HepG2 (cell line): ENCODE measurements at regions of chr14 and their contacts with region 1.

Region 1: DNA sequence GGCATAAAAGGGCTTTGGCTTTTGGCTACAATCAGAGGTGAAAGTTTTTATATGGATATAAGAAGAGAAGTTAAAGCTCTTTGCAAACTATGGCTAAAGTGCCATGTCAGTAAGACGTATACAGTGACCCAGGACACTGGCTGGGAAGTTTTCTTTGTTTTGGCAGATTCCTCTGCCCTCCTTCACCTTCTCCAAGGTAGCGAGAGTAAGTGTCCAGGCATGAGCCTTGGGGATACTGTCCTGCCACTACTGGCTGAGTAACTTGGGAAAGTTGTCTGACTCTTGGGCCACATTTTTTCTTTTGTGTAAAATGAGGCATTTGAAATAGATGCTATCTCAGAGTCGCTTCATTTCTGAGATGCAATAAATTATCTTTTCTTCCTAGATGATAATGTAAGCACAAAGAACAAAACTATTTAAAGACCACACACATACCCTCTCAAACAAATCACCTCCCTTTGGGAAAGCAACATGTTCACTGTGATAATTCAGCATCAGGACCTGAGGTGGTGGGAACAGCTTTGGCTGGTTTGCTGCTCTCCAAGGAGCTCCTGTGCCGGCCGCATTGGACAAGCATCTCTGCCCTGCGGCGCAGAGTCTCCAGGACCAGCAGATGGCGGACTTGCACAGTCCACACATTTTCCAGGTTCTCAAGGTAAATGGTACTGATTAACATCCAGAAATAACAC is 106.3 kb downstream of the PTCSC3 start:
- DNase-seq: peak; percentile 84
- ATAC-seq: peak; percentile 97
- H3K4me3 ChIP-seq: no peak overlapping the region
- H3K27ac ChIP-seq: no peak overlapping the region
- H3K4me1 ChIP-seq: no peaks in the 10 kb centered on the region
- H3K27me3 ChIP-seq: peaks cover 0 to 2% of the 10 kb centered on the region in 2 experiments; a peak in 2 of 5 replicates
- CTCF ChIP-seq: peak; percentile 98
- EP300 ChIP-seq: no peak
- POLR2A ChIP-seq: no peak
- RAD21 ChIP-seq: peak; percentile 95

Region 2: GRCh38 chr14:35730871-35731270 is 339.3 kb before region 1 on chr14:
- CTCF ChIA-PET with region 1: no interaction called
- POLR2A ChIA-PET with region 1: no interaction called
- in situ Hi-C with region 1: no loop called
- intact Hi-C with region 1: no loop called
- DNase-seq: no peak
- ATAC-seq: peak; percentile 29; the same call in 2 of the 3 replicates
- H3K4me3 ChIP-seq: no peak overlapping the region
- H3K27ac ChIP-seq: no peak overlapping the region
- H3K4me1 ChIP-seq: 0 out of 2 replicates have a peak, but pooled peaks cover 5% of the 10 kb centered on the region
- H3K27me3 ChIP-seq: no peaks in the 10 kb centered on the region
- CTCF ChIP-seq: no peak
- EP300 ChIP-seq: no peak
- POLR2A ChIP-seq: no peak
- RAD21 ChIP-seq: no peak

Region 3: DNA sequence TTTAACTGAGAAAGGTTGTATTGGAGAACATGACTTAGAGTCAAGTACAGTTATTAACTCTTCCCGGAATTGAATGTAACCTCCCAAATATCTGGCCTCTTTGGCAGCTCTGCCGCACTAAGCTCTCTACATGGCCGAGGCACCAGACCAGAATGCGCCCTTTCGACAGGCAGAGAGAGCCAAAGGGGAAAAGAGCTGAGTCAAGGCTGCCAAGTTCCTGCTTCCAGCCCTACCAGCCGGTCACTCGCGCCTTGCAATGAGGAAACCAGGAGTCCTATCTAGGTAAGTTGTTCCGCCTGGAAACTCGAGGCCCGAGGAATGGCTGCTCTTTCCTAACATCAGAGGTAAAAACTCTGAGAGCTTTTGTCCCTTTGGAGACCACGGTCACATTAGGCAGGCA is 71.9 kb before region 1 on chr14:
- CTCF ChIA-PET with region 1: no interaction called
- POLR2A ChIA-PET with region 1: no interaction called
- in situ Hi-C with region 1: no loop called
- intact Hi-C with region 1: no loop called
- DNase-seq: no peak
- ATAC-seq: no peak; the same call in 2 of the 3 replicates
- H3K4me3 ChIP-seq: no peak overlapping the region
- H3K27ac ChIP-seq: no peak overlapping the region
- H3K4me1 ChIP-seq: no peaks in the 10 kb centered on the region
- H3K27me3 ChIP-seq: peaks cover 5 to 32% of the 10 kb centered on the region in 2 experiments; a peak in 4 of 5 replicates
- CTCF ChIP-seq: no peak
- EP300 ChIP-seq: no peak
- POLR2A ChIP-seq: no peak
- RAD21 ChIP-seq: no peak

Region 4: DNA sequence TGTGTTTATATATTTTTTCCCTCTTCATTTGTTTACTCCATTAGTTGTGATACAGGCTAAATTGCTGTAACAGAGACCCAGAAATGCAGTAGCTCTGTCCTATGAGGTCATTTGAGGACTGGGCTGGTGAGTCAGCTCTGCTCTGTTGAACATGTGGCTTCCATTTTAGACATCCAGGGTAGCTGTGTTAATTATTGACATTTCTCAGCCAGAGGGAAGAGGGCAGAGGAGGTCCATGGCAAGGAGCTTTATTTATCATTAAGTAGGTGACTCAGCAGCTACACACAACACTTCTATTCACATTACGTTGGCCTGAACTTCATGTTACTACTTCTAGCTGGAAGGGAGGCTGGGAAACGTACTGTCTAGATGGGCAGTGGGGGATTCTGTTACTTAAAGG is 20.9 kb after region 1 on chr14:
- CTCF ChIA-PET with region 1: no interaction called
- POLR2A ChIA-PET with region 1: no interaction called
- in situ Hi-C with region 1: no loop called
- intact Hi-C with region 1: loop called (anchors 2 kb)
- DNase-seq: peak; percentile 98
- ATAC-seq: peak; percentile 100
- H3K4me3 ChIP-seq: no peak overlapping the region; a peak in 1 of 6 replicates
- H3K27ac ChIP-seq: no peak overlapping the region
- H3K4me1 ChIP-seq: peaks cover 16% of the 10 kb centered on the region
- H3K27me3 ChIP-seq: no peaks in the 10 kb centered on the region
- CTCF ChIP-seq: peak; percentile 57
- EP300 ChIP-seq: peak in 1 of 2 experiments; percentile 81; a peak in 1 of 4 replicates
- POLR2A ChIP-seq: no peak
- RAD21 ChIP-seq: no peak

Region 5: DNA sequence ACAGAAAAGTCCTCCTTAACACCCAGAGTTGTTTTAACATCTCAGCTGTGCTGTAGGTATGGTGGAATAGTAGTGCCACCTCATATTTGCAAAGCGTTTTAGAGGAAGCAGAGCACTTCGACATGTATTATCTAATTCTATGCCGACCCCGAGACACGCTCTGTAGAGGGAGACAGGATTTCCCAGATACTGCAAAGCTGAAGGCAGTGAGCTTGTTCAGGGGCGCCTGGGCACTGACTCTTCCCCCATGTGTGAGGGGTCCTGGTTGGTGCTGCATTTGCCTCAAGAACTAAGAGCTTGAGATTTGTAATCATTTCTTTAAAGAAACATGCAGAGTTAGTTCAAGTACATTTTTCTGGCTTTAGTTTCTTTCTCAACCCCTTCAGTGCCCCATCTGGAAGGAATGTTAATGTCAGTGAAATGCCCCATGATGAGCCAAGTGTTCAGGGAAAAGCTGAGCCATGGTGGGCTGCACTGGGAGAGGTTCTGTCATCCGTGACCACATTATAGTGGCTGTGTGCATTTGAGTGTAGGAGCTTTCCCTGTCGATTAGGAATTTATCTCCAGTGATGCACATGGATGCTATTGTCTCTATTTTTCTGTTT is 183.9 kb after region 1 on chr14:
- CTCF ChIA-PET with region 1: interaction called, 3 read pairs
- POLR2A ChIA-PET with region 1: no interaction called
- in situ Hi-C with region 1: no loop called
- intact Hi-C with region 1: loop called (anchors 5 kb)
- DNase-seq: peak; percentile 56
- ATAC-seq: peak; percentile 97
- H3K4me3 ChIP-seq: no peak overlapping the region
- H3K27ac ChIP-seq: no peak overlapping the region
- H3K4me1 ChIP-seq: no peaks in the 10 kb centered on the region
- H3K27me3 ChIP-seq: peaks cover 0 to 14% of the 10 kb centered on the region in 2 experiments; a peak in 2 of 5 replicates
- CTCF ChIP-seq: peak; percentile 43
- EP300 ChIP-seq: no peak
- POLR2A ChIP-seq: no peak
- RAD21 ChIP-seq: no peak

Region 6: DNA sequence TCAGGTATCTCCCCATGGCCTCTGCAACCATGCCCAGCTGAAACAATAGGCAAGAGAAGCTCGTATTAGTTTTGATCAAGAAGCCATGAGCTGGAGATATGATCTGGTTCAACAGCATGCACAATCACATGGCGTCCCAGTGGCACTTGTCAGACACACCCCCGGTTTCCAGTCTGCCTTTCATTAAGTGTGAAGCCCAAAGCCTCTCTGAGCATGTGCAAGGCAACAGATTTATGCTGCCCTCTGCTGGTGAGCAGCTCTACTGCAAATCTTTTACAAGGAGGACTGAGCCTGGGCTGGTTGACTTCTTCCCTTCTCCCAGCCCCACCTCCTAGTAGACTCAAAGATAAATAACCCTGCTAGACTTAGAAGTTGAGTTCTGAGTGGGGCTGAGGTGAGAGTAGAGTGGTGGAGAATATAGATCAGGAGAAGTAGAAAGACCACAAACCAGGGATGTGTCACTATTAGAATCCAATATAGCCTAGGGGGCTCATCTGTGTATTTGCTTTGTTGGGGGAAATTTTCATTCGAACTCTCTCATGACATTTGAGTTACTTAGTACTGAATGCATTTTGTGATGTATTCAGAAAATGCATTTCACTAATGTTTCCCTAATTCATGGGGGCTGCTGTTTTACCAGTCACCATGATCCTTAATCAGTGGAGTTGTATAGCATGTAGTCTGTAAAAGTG is 304.0 kb after region 1 on chr14:
- CTCF ChIA-PET with region 1: interaction called, 124 read pairs
- POLR2A ChIA-PET with region 1: interaction called, 3 read pairs
- in situ Hi-C with region 1: loop called (anchors 5 kb)
- intact Hi-C with region 1: loop called (anchors 1 kb)
- DNase-seq: peak; percentile 92
- ATAC-seq: peak; percentile 99
- H3K4me3 ChIP-seq: no peak overlapping the region
- H3K27ac ChIP-seq: no peak overlapping the region
- H3K4me1 ChIP-seq: no peaks in the 10 kb centered on the region
- H3K27me3 ChIP-seq: no peaks in the 10 kb centered on the region; a peak in 1 of 5 replicates
- CTCF ChIP-seq: peak; percentile 99
- EP300 ChIP-seq: 0 out of 4 replicates have a peak, but pooled peaks of 1 of the 2 experiments have one; percentile 46
- POLR2A ChIP-seq: no peak
- RAD21 ChIP-seq: peak; percentile 93

Region 7: DNA sequence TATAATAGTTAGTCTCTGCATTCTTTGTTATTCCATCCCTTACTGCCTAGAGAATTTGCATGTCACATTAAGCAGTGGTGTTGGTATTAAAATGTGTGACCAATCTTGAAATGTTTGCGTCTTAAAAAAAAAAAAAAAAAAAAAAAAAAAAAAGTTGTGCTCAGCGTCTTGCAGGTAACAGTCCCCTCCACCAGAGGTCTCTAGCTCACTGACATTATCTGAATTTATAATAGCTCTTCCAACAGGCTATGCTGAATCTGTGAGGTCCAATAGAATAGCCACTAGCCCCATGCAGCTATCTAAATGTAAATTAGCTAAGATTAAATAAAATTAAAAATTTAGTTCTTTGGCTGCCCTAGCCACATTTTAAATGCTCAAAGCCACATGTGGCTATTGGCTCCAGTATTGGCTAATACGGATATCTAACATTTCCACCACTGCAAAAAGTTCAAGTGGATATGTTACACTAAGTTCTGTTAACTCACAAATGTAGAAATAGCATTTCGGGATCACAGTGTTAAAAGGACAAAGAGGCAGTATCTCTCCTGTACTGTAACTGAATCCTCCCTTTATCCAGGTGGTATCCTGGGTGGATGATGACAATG is 483.6 kb after region 1 on chr14:
- CTCF ChIA-PET with region 1: interaction called, 5 read pairs
- POLR2A ChIA-PET with region 1: no interaction called
- in situ Hi-C with region 1: no loop called
- intact Hi-C with region 1: loop called (anchors 1 kb)
- DNase-seq: peak; percentile 65
- ATAC-seq: peak; percentile 79
- H3K4me3 ChIP-seq: no peak overlapping the region
- H3K27ac ChIP-seq: no peak overlapping the region
- H3K4me1 ChIP-seq: peaks cover 9% of the 10 kb centered on the region
- H3K27me3 ChIP-seq: peaks cover 0 to 15% of the 10 kb centered on the region in 2 experiments; a peak in 2 of 5 replicates
- CTCF ChIP-seq: peak; percentile 72
- EP300 ChIP-seq: no peak
- POLR2A ChIP-seq: no peak
- RAD21 ChIP-seq: peak; percentile 55